IMR-90 (cell line): ENCODE measurements at regions of chrX and their contacts with region 1.

Region 1: GRCh38 chrX:40266490-40267333 is 169.0 kb upstream of the BCOR start:
- DNase-seq: peak; percentile 56
- ATAC-seq: peak; percentile 95
- H3K4me3 ChIP-seq: peak overlapping the region; percentile 51
- H3K27ac ChIP-seq: peak overlapping the region; percentile 57; the same call in 1 of the 2 replicates
- H3K4me1 ChIP-seq: peaks cover 10% of the 10 kb centered on the region
- H3K27me3 ChIP-seq: no peaks in the 10 kb centered on the region; the same call in 1 of the 2 replicates
- CTCF ChIP-seq: peak; percentile 79
- POLR2A ChIP-seq: peak; percentile 26; the same call in 1 of the 2 replicates
- RAD21 ChIP-seq: peak; percentile 89

Region 2: DNA sequence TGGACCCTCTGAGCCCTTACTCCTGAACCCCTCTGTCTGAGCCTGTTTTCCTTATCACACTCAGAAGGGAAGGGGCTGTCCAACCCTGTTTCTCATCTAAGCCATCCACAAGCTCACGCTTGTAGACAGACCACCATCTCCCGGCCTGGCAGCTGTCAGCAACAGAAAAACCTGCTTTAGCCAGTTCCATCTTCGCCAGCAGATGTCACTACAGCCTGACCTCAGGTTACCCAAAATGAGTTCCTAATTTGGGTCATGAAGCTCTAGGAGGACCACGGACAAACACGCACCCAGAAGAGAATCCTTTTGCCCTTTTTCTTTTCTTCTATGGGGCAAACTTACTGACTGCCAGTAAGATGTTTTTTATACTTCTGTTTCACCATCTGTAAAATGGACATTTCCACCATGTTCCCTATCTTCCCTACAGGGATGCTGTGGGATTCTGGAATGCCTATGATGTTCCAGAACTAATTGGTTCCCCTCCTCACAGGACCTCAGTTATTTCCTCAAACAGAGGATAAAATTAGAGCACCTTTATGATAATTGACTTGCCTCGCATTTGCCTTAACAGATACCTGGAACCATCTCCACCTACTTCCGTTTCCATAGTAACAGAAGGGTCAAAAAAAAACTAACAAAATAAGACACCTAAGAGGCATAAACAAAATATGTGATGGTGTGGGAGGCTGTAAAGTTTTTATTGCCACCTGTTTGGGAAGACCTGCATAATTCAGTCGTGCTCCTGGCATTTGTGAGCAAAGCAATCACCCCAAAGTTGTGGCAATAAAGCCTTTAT is 614.2 kb before region 1 on chrX:
- CTCF ChIA-PET with region 1: no interaction called
- POLR2A ChIA-PET with region 1: no interaction called
- dilution Hi-C with region 1: no loop called
- in situ Hi-C with region 1: no loop called
- intact Hi-C with region 1: loop called (anchors 2 kb)
- DNase-seq: peak; percentile 14
- ATAC-seq: no peak
- H3K4me3 ChIP-seq: no peak overlapping the region
- H3K27ac ChIP-seq: no peak overlapping the region
- H3K4me1 ChIP-seq: no peaks in the 10 kb centered on the region
- H3K27me3 ChIP-seq: peaks cover 42% of the 10 kb centered on the region
- CTCF ChIP-seq: peak; percentile 39
- POLR2A ChIP-seq: no peak
- RAD21 ChIP-seq: peak; percentile 44

Region 3: DNA sequence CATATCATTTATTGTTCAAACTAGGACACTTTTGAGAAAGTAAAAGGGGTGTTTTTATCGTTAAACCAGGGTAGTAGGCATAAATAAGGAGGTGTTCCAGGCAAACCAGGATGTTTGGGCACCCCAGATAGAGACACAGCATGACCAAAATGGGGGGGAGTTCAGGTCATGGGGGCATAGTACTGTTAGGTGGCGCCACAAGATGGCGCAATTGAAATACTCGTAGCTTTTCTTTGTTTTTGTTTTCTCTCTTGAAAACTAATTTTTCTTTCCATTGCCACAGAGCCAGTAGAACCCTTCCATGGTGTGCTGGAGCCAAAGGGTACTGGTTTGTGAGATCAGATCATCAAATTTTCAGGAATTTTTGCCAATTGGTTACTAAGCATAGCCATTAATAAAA is 452.3 kb before region 1 on chrX:
- CTCF ChIA-PET with region 1: no interaction called
- POLR2A ChIA-PET with region 1: no interaction called
- dilution Hi-C with region 1: no loop called
- in situ Hi-C with region 1: no loop called
- intact Hi-C with region 1: loop called (anchors 2 kb)
- DNase-seq: peak; percentile 23
- ATAC-seq: peak; percentile 13; the same call in 1 of the 2 replicates
- H3K4me3 ChIP-seq: no peak overlapping the region
- H3K27ac ChIP-seq: no peak overlapping the region
- H3K4me1 ChIP-seq: peaks cover 3% of the 10 kb centered on the region; the same call in 1 of the 2 replicates
- H3K27me3 ChIP-seq: peaks cover 4% of the 10 kb centered on the region; the same call in 1 of the 2 replicates
- CTCF ChIP-seq: peak; percentile 47
- POLR2A ChIP-seq: no peak
- RAD21 ChIP-seq: peak; percentile 61

Region 4: GRCh38 chrX:39907964-39908616 is 358.6 kb before region 1 on chrX:
- CTCF ChIA-PET with region 1: no interaction called
- POLR2A ChIA-PET with region 1: interaction called, 3 read pairs
- dilution Hi-C with region 1: no loop called
- in situ Hi-C with region 1: no loop called
- intact Hi-C with region 1: loop called (anchors 2 kb)
- DNase-seq: peak; percentile 95
- ATAC-seq: peak; percentile 87
- H3K4me3 ChIP-seq: no peak overlapping the region
- H3K27ac ChIP-seq: peak overlapping the region; percentile 82
- H3K4me1 ChIP-seq: peaks cover 20% of the 10 kb centered on the region
- H3K27me3 ChIP-seq: no peaks in the 10 kb centered on the region
- CTCF ChIP-seq: no peak
- POLR2A ChIP-seq: no peak
- RAD21 ChIP-seq: no peak

Region 5: DNA sequence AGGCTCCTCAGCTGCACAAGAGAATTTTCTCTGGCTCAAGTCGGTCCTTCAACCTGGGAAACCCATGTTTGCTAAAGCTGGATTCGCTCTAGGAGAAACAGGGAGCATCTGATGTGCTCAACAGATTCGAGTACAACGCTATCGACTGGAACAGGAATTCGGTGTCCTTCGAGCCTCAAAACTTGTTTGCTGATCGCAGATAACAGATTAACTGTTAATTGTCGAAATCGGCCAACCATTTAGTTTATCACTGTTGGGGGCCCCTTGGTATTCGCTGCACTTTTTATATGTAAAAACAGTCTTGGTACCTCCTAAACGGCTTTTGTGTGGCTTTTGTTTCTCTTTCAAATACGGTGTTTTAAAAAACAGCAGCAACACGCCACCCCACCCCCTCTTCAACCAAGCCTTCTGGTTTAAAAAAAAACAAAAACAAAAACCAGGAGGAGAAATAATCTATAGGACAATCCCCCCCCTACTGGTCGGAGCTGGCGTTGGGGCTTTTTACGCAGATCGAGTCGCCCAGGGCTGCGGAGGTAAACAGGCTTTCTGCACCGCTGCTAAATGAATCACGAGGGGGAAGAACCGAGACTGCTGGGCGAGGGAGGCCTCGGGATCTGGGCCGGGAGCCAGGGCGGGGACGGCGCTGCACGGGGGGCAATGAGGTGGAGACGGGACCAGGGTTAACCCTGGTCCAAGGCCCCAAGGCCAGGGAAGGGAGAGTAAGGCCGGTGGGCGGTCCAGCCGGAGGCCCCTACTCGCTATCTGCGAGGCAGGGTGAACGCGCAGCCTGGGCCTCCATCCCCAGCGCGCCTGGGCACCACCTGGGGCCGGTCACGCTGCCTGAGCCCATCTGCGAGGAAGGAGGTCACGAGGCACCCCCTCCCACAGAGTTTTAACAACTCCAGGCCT is 97.3 kb before region 1 on chrX:
- CTCF ChIA-PET with region 1: no interaction called
- POLR2A ChIA-PET with region 1: no interaction called
- dilution Hi-C with region 1: no loop called
- in situ Hi-C with region 1: no loop called
- intact Hi-C with region 1: loop called (anchors 5 kb)
- DNase-seq: peak; percentile 75
- ATAC-seq: peak; percentile 73
- H3K4me3 ChIP-seq: no peak overlapping the region
- H3K27ac ChIP-seq: no peak overlapping the region
- H3K4me1 ChIP-seq: no peaks in the 10 kb centered on the region; the same call in 1 of the 2 replicates
- H3K27me3 ChIP-seq: peaks cover 21% of the 10 kb centered on the region
- CTCF ChIP-seq: peak; percentile 64
- POLR2A ChIP-seq: no peak
- RAD21 ChIP-seq: peak; percentile 56